Astrocyte of the spinal cord (primary cell): ENCODE measurements at regions of chr3 and their contacts with region 1.

Region 1: DNA sequence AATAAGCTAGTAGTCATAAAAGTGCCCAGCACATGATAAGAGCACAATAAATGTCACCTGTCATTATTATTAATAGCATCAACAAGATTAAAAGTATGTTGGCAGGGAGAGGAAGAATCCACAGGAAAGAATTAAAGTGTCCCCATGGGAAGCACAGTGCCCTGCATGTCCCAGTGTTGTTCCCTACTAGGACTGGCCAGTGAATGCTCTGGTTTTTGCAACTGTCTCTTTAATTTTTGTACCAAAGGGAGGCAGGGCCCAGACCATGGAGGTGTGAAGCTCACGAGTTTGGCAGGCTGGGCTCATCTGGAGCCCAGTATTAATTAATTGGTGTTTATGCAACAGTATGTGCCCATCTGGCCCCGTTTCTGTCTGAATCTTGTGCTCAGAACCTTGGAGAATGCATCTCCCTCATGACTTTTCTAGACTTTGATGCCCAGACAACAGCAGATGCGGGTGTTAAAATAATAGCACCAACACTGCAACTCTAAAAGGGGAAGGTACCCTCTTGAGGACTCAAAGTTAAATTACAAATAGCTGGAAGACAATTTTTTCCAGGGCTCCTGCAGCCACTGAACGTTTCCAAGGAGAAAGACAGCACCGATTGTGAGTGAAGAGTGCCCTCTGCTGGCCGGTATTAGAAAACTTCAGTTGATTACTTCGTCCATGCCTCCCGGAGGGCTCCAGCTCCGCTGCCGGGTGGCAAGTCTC is 71.9 kb upstream of the SPATA12 start:
- DNase-seq: peak; percentile 78
- H3K4me3 ChIP-seq: no peak overlapping the region
- CTCF ChIP-seq: peak; percentile 59

Region 2: DNA sequence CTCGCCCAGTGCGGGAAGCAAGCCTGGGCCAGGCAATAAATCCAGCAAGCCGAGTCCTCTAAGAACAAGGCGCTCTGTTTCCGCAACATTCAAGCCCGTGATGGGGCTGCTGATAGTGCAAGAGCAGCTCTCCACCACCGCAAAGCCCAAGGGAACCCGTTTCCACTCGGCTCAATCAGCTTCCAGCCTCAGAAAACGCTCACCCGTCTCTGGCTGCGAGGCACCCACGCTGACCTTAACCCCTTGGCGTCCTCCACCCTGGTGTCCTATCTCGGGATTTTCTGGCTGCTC is 89.7 kb after region 1 on chr3:
- in situ Hi-C with region 1: loop called (anchors 25 kb)
- DNase-seq: peak; percentile 41
- H3K4me3 ChIP-seq: peak overlapping the region; percentile 75
- CTCF ChIP-seq: no peak